CD4-positive, alpha-beta T cell (primary cell): ENCODE measurements at regions of chr20 and their contacts with region 1.

Region 1: GRCh38 chr20:354298-355064 is 7.6 kb downstream of the NRSN2 start:
- DNase-seq: peak; percentile 64 to 91 (median 74)
- ATAC-seq: peak; percentile 100
- H3K4me3 ChIP-seq: no peak overlapping the region
- H3K4me3 Mint-ChIP-seq: no peak overlapping the region
- H3K27ac ChIP-seq: no peak overlapping the region
- H3K27ac Mint-ChIP-seq: no peak overlapping the region
- H3K4me1 ChIP-seq: peaks cover 8% of the 10 kb centered on the region
- H3K4me1 Mint-ChIP-seq: no peaks in the 10 kb centered on the region
- H3K27me3 ChIP-seq: no peaks in the 10 kb centered on the region
- H3K27me3 Mint-ChIP-seq: no peaks in the 10 kb centered on the region
- CTCF ChIP-seq: peak; percentile 96

Region 2: DNA sequence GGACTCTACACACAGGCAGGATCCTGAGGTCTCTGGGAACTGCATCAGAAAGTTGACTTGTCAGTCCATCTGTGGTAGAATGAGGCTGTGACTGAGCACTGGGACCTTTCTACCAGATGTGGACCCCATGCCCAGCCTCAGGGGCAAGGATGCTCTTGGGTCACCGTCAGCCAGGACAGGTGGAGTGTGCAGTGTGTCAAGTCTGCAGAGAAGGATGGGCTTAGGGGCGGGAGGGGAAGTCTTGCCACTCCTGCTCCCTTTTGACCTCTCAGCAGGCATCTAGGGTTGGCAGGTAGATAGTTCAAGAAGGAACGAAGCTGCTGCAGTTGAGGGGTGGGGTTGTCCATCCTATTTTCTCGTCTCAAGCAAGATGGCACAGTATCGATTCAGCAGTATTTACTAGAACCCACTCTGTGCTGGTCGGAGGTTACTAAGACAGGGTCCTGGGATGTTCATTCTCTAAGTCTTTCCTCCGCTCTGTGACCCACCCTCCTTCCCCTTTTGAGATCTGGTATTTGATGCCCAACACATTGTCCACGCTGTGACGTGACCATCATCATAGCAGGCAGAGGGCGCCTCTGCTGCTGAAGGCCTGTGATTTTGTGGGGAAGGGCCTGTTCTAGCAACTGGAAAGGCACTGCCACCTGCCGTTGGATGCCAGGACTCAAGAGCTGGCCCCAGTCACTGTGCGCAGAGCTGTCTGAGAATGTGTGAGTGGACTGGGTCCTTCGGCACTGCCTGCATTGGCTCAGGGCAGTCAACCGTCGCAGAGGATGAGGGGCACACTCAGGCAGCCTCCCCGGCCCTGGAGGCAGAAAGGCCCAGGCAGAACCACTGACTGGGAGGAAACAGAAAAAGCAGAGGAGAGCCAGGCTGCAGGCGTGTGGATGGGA is 76.8 kb after region 1 on chr20:
- CTCF ChIA-PET with region 1: interaction called, 4 read pairs
- POLR2A ChIA-PET with region 1: no interaction called
- intact Hi-C with region 1: loop called (anchors 1 to 2 kb)
- DNase-seq: peak in 9 of 14 experiments; percentile 10 to 71 (median 27)
- ATAC-seq: peak; percentile 37
- H3K4me3 ChIP-seq: no peak overlapping the region
- H3K4me3 Mint-ChIP-seq: no peak overlapping the region
- H3K27ac ChIP-seq: peak overlapping the region in 1 of 2 donors; percentile 32
- H3K27ac Mint-ChIP-seq: no peak overlapping the region
- H3K4me1 ChIP-seq: peaks cover 25% of the 10 kb centered on the region
- H3K4me1 Mint-ChIP-seq: peaks cover 31% of the 10 kb centered on the region
- H3K27me3 ChIP-seq: no peaks in the 10 kb centered on the region
- H3K27me3 Mint-ChIP-seq: no peaks in the 10 kb centered on the region
- CTCF ChIP-seq: peak; percentile 33

Region 3: GRCh38 chr20:645318-646106 is 291.0 kb after region 1 on chr20:
- CTCF ChIA-PET with region 1: interaction called, 4 read pairs
- POLR2A ChIA-PET with region 1: no interaction called
- intact Hi-C with region 1: loop called (anchors 2 to 5 kb)
- DNase-seq: peak; percentile 28 to 80 (median 52)
- ATAC-seq: peak; percentile 69
- H3K4me3 ChIP-seq: no peak overlapping the region
- H3K4me3 Mint-ChIP-seq: no peak overlapping the region
- H3K27ac ChIP-seq: no peak overlapping the region
- H3K27ac Mint-ChIP-seq: no peak overlapping the region
- H3K4me1 ChIP-seq: peaks cover 17% of the 10 kb centered on the region
- H3K4me1 Mint-ChIP-seq: peaks cover 22% of the 10 kb centered on the region
- H3K27me3 ChIP-seq: peaks cover 12 to 14% of the 10 kb centered on the region in 2 experiments
- H3K27me3 Mint-ChIP-seq: peaks cover 21% of the 10 kb centered on the region
- CTCF ChIP-seq: peak; percentile 95

Region 4: GRCh38 chr20:667391-667964 is 313.0 kb after region 1 on chr20:
- CTCF ChIA-PET with region 1: no interaction called
- POLR2A ChIA-PET with region 1: no interaction called
- intact Hi-C with region 1: loop called (anchors 1 to 5 kb)
- DNase-seq: peak; percentile 20 to 71 (median 46)
- ATAC-seq: no peak
- H3K4me3 ChIP-seq: no peak overlapping the region
- H3K4me3 Mint-ChIP-seq: no peak overlapping the region
- H3K27ac ChIP-seq: no peak overlapping the region
- H3K27ac Mint-ChIP-seq: no peak overlapping the region
- H3K4me1 ChIP-seq: no peaks in the 10 kb centered on the region
- H3K4me1 Mint-ChIP-seq: no peaks in the 10 kb centered on the region
- H3K27me3 ChIP-seq: peaks cover 52 to 65% of the 10 kb centered on the region in 2 experiments
- H3K27me3 Mint-ChIP-seq: peaks cover 79% of the 10 kb centered on the region
- CTCF ChIP-seq: peak; percentile 70